ENCODE measurements at regions of chr4 and their contacts with region 1.

Region 1: GRCh38 chr4:44678094-44679041 is at the start of gene GUF1:
- DNase-seq: peak; percentile 89 to 95 (median 93)
- ATAC-seq: peak; percentile 98 to 99 (median 99)
- H3K4me3 ChIP-seq: peak within 1 kb of the TSS; percentile 57 to 95 (median 80)
- H3K27ac ChIP-seq: peak within 1 kb of the TSS; percentile 47 to 93 (median 88)
- H3K4me1 ChIP-seq: peaks cover 0 to 31% (median 15%) of the 10 kb centered on the region in 12 donors
- H3K27me3 ChIP-seq: no peaks in the 10 kb centered on the region
- CTCF ChIP-seq: peak in 1 of 12 donors; percentile 4
- POLR2A ChIP-seq: peak in 1 of 2 donors; percentile 60
- total RNA-seq, gene GUF1: 14.6 to 25.9 (median 22.7) TPM

Region 2: DNA sequence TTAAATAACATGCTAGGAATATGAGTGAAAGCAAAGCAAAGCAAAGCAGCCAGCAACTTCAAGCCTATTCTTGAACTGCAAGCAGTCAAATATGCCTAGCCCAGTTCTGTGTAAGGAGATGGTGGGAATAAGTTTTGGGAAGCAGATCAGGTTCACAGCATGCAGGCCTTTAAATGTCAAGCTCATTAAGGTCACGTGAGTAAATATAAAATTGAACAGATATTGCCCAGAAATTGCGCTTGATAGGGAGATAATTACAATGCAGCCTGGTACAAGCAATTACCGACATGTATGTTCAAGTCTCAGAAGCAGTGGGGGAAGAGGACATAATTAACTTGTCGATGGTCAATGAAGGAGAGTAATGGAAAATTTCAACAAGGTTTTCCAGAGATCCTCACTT is 42.0 kb after region 1 on chr4:
- intact Hi-C with region 1: loop called in 4 of 10 experiments (anchors 5 to 10 kb)
- DNase-seq: no peak
- ATAC-seq: no peak
- H3K4me3 ChIP-seq: no peak overlapping the region
- H3K27ac ChIP-seq: no peak overlapping the region
- H3K4me1 ChIP-seq: peaks cover 0 to 32% (median 6%) of the 10 kb centered on the region in 12 donors
- H3K27me3 ChIP-seq: no peaks in the 10 kb centered on the region
- CTCF ChIP-seq: no peak
- POLR2A ChIP-seq: no peak

Region 3: GRCh38 chr4:44726262-44726871 is 48.0 kb after region 1 on chr4 and contains the start of gene GNPDA2:
- intact Hi-C with region 1: loop called in 4 of 10 experiments (anchors 5 to 10 kb)
- DNase-seq: peak; percentile 91 to 95 (median 95)
- ATAC-seq: peak; percentile 97 to 99 (median 98)
- H3K4me3 ChIP-seq: peak within 1 kb of the TSS; percentile 74 to 91 (median 80)
- H3K27ac ChIP-seq: peak within 1 kb of the TSS; percentile 56 to 94 (median 85)
- H3K4me1 ChIP-seq: peaks cover 0 to 33% (median 13%) of the 10 kb centered on the region in 12 donors
- H3K27me3 ChIP-seq: no peaks in the 10 kb centered on the region
- CTCF ChIP-seq: peak in 6 of 12 donors; percentile 12 to 51 (median 28)
- POLR2A ChIP-seq: peak in 1 of 2 donors; percentile 65
- total RNA-seq, gene GNPDA2: 8.7 to 20.0 (median 12.5) TPM

Region 4: GRCh38 chr4:44760142-44760898 is 82.0 kb after region 1 on chr4:
- intact Hi-C with region 1: no loop called
- DNase-seq: no peak
- ATAC-seq: peak; percentile 37 to 83 (median 68)
- H3K4me3 ChIP-seq: no peak overlapping the region
- H3K27ac ChIP-seq: peak overlapping the region in 1 of 12 donors; percentile 16
- H3K4me1 ChIP-seq: peaks cover 0 to 4% (median 0%) of the 10 kb centered on the region in 12 donors
- H3K27me3 ChIP-seq: no peaks in the 10 kb centered on the region
- CTCF ChIP-seq: peak; percentile 30 to 62 (median 48)
- POLR2A ChIP-seq: no peak